Pancreas (tissue), 10 donors: ENCODE measurements at regions of chr20 and their contacts with region 1.

Region 1: GRCh38 chr20:25407311-25408169 is at the start of gene GINS1:
- DNase-seq: peak; percentile 72 to 91 (median 83)
- ATAC-seq: peak; percentile 97 to 99 (median 98)
- H3K4me3 ChIP-seq: peak within 1 kb of the TSS; percentile 58 to 80 (median 67)
- H3K27ac ChIP-seq: peak within 1 kb of the TSS in 2 of 4 donors; percentile 34 to 37
- H3K4me1 ChIP-seq: peaks cover 0 to 7% (median 6%) of the 10 kb centered on the region in 3 donors
- H3K27me3 ChIP-seq: no peaks in the 10 kb centered on the region
- CTCF ChIP-seq: no peak
- total RNA-seq, gene GINS1: 0.32 to 0.98 (median 0.50) TPM

Region 2: GRCh38 chr20:25294459-25295385 is 112.8 kb before region 1 on chr20:
- intact Hi-C with region 1: loop called in 1 of 3 experiments (anchors 10 kb)
- DNase-seq: peak in 2 of 6 donors; percentile 45 to 67
- ATAC-seq: peak in 3 of 4 donors; percentile 23 to 63 (median 50)
- H3K4me3 ChIP-seq: no peak overlapping the region
- H3K27ac ChIP-seq: peak overlapping the region; percentile 28 to 60 (median 53)
- H3K4me1 ChIP-seq: peaks cover 0 to 24% (median 8%) of the 10 kb centered on the region in 3 donors
- H3K27me3 ChIP-seq: no peaks in the 10 kb centered on the region
- CTCF ChIP-seq: peak in 3 of 4 donors; percentile 35